ENCODE measurements at regions of chr16 and their contacts with region 1.

Region 1: GRCh38 chr16:68264128-68265077 is at the start of gene SLC7A6:
- DNase-seq: no peak
- ATAC-seq: peak; percentile 71
- H3K4me3 ChIP-seq: peak within 1 kb of the TSS; percentile 87
- H3K27ac ChIP-seq: peak within 1 kb of the TSS; percentile 85
- H3K4me1 ChIP-seq: peaks cover 18% of the 10 kb centered on the region
- H3K27me3 ChIP-seq: no peaks in the 10 kb centered on the region
- CTCF ChIP-seq: peak; percentile 77 to 85 (median 81); a peak in 5 of 6 replicates
- EP300 ChIP-seq: no peak
- POLR2A ChIP-seq: peak; percentile 81
- RAD21 ChIP-seq: peak; percentile 43
- polyA plus RNA-seq, gene SLC7A6: 8.2 TPM

Region 2: DNA sequence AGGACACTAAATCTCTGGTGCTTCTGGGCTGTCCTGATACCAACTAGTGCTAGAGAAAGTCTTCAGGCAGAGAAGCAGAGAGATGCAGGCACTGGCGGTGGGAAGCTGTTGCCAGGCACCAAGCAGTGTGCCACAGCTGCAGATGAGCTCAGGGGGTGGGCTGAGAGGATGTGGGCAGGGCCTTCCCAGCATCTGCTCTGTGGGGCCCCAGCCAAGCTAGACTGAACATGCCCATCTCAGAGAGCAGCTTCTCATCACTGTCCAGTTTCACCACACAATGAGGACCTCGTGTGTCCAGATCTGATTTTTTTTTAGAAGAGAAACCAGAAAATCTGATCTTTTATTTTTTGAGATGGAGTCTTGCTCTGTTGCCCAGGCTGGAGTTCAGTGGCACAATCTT is 354.2 kb before region 1 on chr16:
- CTCF ChIA-PET with region 1: no interaction called
- POLR2A ChIA-PET with region 1: no interaction called
- RAD21 ChIA-PET with region 1: no interaction called
- SMC1A ChIA-PET with region 1: no interaction called
- in situ Hi-C with region 1: no loop called
- intact Hi-C with region 1: no loop called
- DNase-seq: no peak
- ATAC-seq: peak; percentile 95
- H3K4me3 ChIP-seq: no peak overlapping the region
- H3K27ac ChIP-seq: no peak overlapping the region
- H3K4me1 ChIP-seq: 0 out of 2 replicates have a peak, but pooled peaks cover 3% of the 10 kb centered on the region
- H3K27me3 ChIP-seq: no peaks in the 10 kb centered on the region
- CTCF ChIP-seq: no peak
- EP300 ChIP-seq: no peak
- POLR2A ChIP-seq: no peak
- RAD21 ChIP-seq: no peak

Region 3: GRCh38 chr16:68136515-68136914 is 127.9 kb before region 1 on chr16:
- CTCF ChIA-PET with region 1: no interaction called
- POLR2A ChIA-PET with region 1: no interaction called
- RAD21 ChIA-PET with region 1: no interaction called
- SMC1A ChIA-PET with region 1: no interaction called
- in situ Hi-C with region 1: no loop called
- intact Hi-C with region 1: no loop called
- DNase-seq: no peak
- ATAC-seq: no peak
- H3K4me3 ChIP-seq: no peak overlapping the region
- H3K27ac ChIP-seq: no peak overlapping the region
- H3K4me1 ChIP-seq: peaks cover 4% of the 10 kb centered on the region
- H3K27me3 ChIP-seq: no peaks in the 10 kb centered on the region
- CTCF ChIP-seq: no peak
- EP300 ChIP-seq: no peak
- POLR2A ChIP-seq: no peak
- RAD21 ChIP-seq: no peak

Region 4: DNA sequence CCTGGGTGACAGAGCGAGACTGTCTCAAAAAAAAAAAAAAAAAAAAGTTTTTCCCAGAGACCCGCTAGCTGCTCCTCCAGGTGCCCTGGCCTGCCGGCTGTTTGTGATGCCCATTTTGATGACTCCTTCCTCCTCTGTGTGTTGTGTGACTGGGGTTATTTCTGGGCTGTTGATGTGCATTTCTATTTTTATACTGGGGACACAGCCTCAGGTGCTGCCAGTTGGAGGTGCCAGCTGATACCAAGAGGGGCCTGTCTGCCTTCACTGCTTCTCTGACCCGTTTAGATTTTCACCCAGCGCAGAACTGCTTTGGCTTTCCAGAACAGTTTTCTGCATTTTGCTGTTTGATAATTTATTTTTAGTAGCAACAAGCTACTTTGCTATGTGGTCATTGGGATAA is 12.6 kb before region 1 on chr16:
- CTCF ChIA-PET with region 1: interaction called, 108 read pairs
- POLR2A ChIA-PET with region 1: interaction called, 4 read pairs
- RAD21 ChIA-PET with region 1: interaction called, 8 read pairs
- SMC1A ChIA-PET with region 1: interaction called, 13 read pairs
- in situ Hi-C with region 1: no loop called
- intact Hi-C with region 1: no loop called
- DNase-seq: no peak
- ATAC-seq: peak; percentile 16; the same call in 1 of the 3 replicates
- H3K4me3 ChIP-seq: no peak overlapping the region
- H3K27ac ChIP-seq: no peak overlapping the region
- H3K4me1 ChIP-seq: peaks cover 9% of the 10 kb centered on the region
- H3K27me3 ChIP-seq: no peaks in the 10 kb centered on the region
- CTCF ChIP-seq: no peak
- EP300 ChIP-seq: no peak
- POLR2A ChIP-seq: no peak
- RAD21 ChIP-seq: no peak

Region 5: GRCh38 chr16:68289621-68290329 is 25.4 kb after region 1 on chr16:
- CTCF ChIA-PET with region 1: interaction called, 126 read pairs
- POLR2A ChIA-PET with region 1: interaction called, 177 read pairs
- RAD21 ChIA-PET with region 1: interaction called, 97 read pairs
- SMC1A ChIA-PET with region 1: interaction called, 253 read pairs
- in situ Hi-C with region 1: no loop called
- intact Hi-C with region 1: loop called (anchors 1 kb)
- DNase-seq: peak; percentile 77
- ATAC-seq: peak; percentile 95
- H3K4me3 ChIP-seq: peak overlapping the region; percentile 29; the same call in 1 of the 2 replicates
- H3K27ac ChIP-seq: peak overlapping the region; percentile 92
- H3K4me1 ChIP-seq: peaks cover 57% of the 10 kb centered on the region
- H3K27me3 ChIP-seq: no peaks in the 10 kb centered on the region
- CTCF ChIP-seq: no peak
- EP300 ChIP-seq: 0 out of 4 replicates have a peak, but pooled peaks of 1 of the 2 experiments have one; percentile 11
- POLR2A ChIP-seq: 0 out of 2 replicates have a peak, but pooled peaks have one; percentile 37
- RAD21 ChIP-seq: no peak

Region 6: DNA sequence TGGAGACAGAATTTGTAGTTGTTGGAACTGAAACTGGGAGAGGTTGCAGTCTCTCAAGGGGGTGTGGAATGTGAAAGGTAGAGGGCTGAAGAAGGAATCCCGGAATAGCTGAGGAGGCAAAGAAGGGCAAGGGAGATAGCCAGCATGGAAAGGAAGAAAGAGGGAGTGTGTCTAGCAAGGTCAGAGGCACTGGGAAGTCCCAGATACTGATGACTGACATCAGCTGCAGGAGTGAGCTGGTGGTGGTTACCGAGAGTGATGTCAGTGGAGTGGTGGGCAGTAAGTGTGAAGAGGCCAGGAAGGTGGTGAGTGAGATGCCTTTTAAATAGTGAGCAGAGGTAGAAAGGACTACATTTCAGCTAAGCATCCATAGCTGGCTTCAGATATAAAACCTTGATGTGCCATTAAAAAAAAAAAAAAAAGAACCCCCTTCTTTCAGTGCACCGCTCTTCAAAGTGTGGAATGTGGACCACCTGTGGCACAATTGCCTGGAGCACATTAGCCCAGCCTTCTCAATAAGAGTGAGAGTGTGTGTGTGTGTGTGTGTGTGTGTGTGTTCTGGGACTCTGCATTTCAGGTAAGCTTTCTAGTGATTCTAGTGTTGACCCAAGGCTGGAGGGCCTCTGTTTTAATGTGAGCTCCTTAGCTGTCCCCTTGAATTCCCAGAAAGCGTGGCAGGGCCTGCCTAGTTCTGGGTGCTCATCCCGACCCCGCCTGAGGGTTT is 54.9 kb after region 1 on chr16:
- CTCF ChIA-PET with region 1: interaction called, 747 read pairs
- POLR2A ChIA-PET with region 1: interaction called, 26 read pairs
- RAD21 ChIA-PET with region 1: interaction called, 399 read pairs
- SMC1A ChIA-PET with region 1: interaction called, 85 read pairs
- in situ Hi-C with region 1: no loop called
- intact Hi-C with region 1: no loop called
- DNase-seq: no peak
- ATAC-seq: peak; percentile 100
- H3K4me3 ChIP-seq: no peak overlapping the region
- H3K27ac ChIP-seq: peak overlapping the region; percentile 61
- H3K4me1 ChIP-seq: peaks cover 8% of the 10 kb centered on the region
- H3K27me3 ChIP-seq: no peaks in the 10 kb centered on the region
- CTCF ChIP-seq: no peak
- EP300 ChIP-seq: peak in 1 of 2 experiments; percentile 71; a peak in 3 of 4 replicates
- POLR2A ChIP-seq: no peak
- RAD21 ChIP-seq: no peak

Region 7: DNA sequence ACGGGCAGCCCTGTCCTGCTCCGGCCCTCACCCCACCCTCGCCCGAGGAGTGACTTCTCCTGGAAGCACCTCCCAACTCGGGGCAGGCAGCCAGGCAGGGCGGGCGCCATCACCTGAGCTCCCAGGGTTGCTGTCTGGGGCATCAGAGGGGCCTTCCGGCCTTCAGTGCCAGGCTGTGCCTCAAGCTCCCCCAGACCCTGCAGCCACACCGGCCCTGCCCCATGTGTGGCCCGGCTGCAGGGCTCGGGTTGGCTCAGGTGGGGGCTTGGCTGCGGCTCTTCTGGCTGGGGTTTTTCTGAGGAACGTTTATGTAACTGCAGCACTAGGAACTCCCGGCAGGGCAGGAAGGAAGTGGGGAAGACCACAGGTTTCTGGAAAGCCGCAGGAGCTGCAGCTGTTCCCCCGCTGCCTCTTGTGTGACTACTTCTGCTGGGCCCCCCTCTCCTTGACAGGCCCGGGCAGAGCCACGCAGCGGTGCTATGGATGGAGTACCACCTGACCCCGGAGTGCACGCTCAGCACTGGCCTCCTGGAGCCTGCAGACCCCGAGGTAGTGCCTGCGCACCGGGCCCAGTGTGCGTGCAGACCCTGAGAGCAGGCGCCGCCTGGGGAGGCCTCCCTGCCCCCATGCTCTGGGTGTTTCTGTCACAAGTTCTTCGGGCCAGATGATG is 92.0 kb after region 1 on chr16:
- CTCF ChIA-PET with region 1: interaction called, 16 read pairs
- POLR2A ChIA-PET with region 1: no interaction called
- RAD21 ChIA-PET with region 1: interaction called, 9 read pairs
- SMC1A ChIA-PET with region 1: interaction called, 4 read pairs
- in situ Hi-C with region 1: no loop called
- intact Hi-C with region 1: no loop called
- DNase-seq: peak; percentile 69
- ATAC-seq: peak; percentile 89
- H3K4me3 ChIP-seq: no peak overlapping the region
- H3K27ac ChIP-seq: peak overlapping the region; percentile 51
- H3K4me1 ChIP-seq: peaks cover 23% of the 10 kb centered on the region
- H3K27me3 ChIP-seq: no peaks in the 10 kb centered on the region
- CTCF ChIP-seq: no peak
- EP300 ChIP-seq: peak; percentile 60 to 88; a peak in 3 of 4 replicates
- POLR2A ChIP-seq: peak; percentile 36; the same call in 1 of the 2 replicates
- RAD21 ChIP-seq: no peak

Region 8: DNA sequence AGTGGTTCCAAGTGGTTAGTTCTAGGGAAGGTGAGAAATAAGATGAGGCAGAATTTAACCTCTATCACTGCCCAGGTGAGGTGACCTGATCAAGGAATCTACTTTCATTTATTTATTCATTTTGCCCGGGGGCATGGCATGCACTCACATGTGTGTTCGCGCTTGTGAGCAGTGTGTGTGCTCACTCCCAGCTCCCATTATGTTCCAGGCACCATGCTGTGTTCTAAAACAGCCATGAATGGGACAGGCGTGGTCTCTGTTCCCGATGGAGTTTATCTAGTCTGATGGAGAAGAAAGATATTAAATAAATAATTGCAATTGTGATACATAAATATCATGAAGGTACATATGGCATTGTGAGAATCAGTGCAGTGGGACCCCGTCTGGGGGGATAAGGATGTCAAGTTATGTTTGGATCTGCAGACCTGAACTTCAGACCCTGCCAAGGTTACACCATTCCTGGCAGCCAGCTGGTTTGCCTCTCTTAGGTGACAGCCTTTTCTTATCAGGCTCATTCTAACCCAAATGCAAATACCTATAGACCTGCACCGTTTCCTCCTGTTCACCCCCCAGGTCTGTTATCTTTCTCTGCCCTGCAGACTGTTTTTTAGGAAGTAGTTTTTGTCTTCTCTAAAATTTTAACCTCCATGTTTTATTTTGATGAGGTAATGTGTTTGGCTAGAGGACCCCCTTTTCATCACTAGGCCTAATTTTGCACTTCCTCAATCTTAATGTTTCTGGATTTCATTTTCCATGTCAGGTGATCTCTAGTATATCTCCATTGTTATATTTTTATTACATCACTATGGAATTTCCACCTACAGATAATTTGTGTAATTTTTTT is 1171.8 kb after region 1 on chr16:
- CTCF ChIA-PET with region 1: no interaction called
- POLR2A ChIA-PET with region 1: no interaction called
- RAD21 ChIA-PET with region 1: no interaction called
- SMC1A ChIA-PET with region 1: no interaction called
- in situ Hi-C with region 1: no loop called
- intact Hi-C with region 1: no loop called
- DNase-seq: no peak
- ATAC-seq: peak; percentile 34
- H3K4me3 ChIP-seq: no peak overlapping the region
- H3K27ac ChIP-seq: no peak overlapping the region
- H3K4me1 ChIP-seq: peaks cover 39% of the 10 kb centered on the region
- H3K27me3 ChIP-seq: no peaks in the 10 kb centered on the region
- CTCF ChIP-seq: no peak
- EP300 ChIP-seq: no peak
- POLR2A ChIP-seq: no peak
- RAD21 ChIP-seq: no peak

Measured in GM12878 (cell line).